Spleen (tissue), 13 donors: ENCODE measurements at regions of chr5 and their contacts with region 1.

Region 1: DNA sequence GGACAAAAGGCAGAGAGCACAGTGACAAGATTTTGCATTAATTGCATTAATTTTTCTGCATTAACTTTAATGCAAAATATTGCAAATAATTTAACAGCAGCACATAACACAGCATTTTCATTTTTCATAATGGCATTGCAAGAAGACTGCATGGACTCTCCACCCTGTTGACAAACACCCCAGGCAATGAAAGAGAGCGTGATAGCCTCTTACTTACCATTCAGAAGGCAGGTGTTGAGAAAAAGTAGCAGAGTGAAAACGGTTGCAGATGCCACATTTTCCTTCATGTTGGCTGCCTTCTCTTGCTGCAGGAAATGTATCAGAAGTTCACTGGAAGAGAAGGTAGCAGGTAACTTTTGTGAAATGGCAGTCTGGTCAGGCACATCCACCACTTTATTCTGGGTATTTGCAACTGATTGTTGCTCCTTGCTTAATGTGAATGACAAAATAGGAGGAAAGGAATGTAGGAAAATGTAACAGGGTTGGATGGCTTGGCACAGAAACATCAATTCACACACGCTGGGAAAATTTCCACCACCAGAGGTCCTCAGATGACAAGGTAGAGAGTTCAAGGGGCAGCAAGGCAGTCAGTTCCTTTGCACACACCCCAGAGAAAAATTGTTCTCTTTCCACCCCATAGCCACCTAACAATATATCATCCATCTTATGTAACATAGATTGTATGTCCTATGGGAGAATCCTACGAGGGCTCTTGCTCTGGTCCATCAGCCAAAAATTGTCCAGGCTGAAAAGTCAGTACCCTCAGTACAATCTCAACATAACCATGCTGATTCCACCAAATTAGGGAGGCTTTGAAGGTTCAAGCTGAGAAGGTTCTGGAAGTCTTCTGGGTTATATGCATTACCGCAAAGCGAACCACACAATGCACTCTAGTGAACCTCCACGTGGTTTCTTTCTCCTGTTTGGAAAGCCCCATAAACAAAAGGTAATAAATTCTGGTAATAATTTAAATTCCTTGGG is 41.9 kb upstream of the AGXT2 start:
- DNase-seq: no peak
- H3K4me3 ChIP-seq: no peak overlapping the region
- H3K27ac ChIP-seq: no peak overlapping the region
- H3K4me1 ChIP-seq: peaks cover 0 to 3% (median 0%) of the 10 kb centered on the region in 6 donors
- H3K27me3 ChIP-seq: no peaks in the 10 kb centered on the region
- CTCF ChIP-seq: peak in 10 of 11 experiments; percentile 32 to 69 (median 63)
- POLR2A ChIP-seq: no peak

Region 2: GRCh38 chr5:35026280-35026840 is 63.3 kb before region 1 on chr5:
- intact Hi-C with region 1: no loop called
- DNase-seq: no peak
- H3K4me3 ChIP-seq: no peak overlapping the region
- H3K27ac ChIP-seq: no peak overlapping the region
- H3K4me1 ChIP-seq: no peaks in the 10 kb centered on the region
- H3K27me3 ChIP-seq: no peaks in the 10 kb centered on the region
- CTCF ChIP-seq: no peak
- POLR2A ChIP-seq: no peak

Region 3: GRCh38 chr5:35182541-35183535 is 93.2 kb after region 1 on chr5:
- intact Hi-C with region 1: loop called (anchors 10 kb)
- DNase-seq: no peak
- H3K4me3 ChIP-seq: no peak overlapping the region
- H3K27ac ChIP-seq: no peak overlapping the region
- H3K4me1 ChIP-seq: no peaks in the 10 kb centered on the region
- H3K27me3 ChIP-seq: peaks cover 0 to 3% (median 0%) of the 10 kb centered on the region in 7 donors
- CTCF ChIP-seq: peak in 4 of 11 experiments; percentile 16 to 41 (median 25)
- POLR2A ChIP-seq: no peak